ENCODE measurements at regions of chr4 and their contacts with region 1.

Region 1: DNA sequence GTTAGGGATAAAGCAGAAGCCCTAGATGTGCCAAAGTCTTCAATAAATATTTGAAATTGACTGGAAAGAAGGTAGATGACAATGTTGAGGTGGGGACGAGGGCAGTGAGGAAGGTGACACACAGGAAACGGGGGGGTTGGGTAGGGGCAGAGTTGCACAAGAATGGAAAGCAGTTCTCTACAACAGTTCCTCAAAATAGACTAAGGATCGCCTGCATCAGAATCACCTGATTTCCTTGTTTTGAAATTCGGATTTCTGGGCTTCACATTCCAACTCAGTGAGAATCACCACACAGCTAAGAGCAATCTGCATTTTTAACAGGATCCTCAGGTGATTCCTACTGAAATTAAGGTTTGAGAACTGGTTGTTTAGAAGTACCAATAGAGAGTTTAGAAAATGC is 70.6 kb downstream of the ARFIP1 start:
- DNase-seq: no peak
- H3K4me3 ChIP-seq: no peak overlapping the region
- H3K27ac ChIP-seq: no peak overlapping the region
- H3K4me1 ChIP-seq: no peaks in the 10 kb centered on the region
- H3K27me3 ChIP-seq: no peaks in the 10 kb centered on the region
- CTCF ChIP-seq: no peak
- EP300 ChIP-seq: no peak
- POLR2A ChIP-seq: no peak

Region 2: DNA sequence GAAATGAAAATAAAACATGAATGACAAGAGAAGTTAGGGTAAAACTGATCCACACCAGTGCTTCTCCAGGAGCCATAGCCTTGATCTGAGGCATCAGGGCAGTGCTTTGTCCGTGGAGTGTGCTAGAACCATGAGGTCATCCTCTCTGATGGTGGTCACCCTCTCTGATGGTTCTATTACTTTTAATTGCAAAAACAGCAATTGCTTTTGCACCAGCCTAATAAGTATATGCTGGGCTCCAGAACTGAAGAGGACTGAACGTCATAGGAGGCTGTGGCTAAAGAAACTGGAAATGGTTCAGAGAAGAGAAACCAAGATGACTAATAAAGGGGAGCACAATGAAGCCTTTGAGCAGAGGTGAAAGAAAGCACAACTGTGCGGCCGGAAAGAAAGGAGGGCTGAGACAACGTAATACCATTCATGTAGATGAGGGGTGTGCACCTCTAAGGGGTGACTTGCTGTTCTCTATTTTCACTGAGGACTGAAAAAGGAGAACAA is 153.6 kb before region 1 on chr4:
- intact Hi-C with region 1: no loop called
- DNase-seq: no peak
- H3K4me3 ChIP-seq: no peak overlapping the region
- H3K27ac ChIP-seq: no peak overlapping the region
- H3K4me1 ChIP-seq: no peaks in the 10 kb centered on the region
- H3K27me3 ChIP-seq: no peaks in the 10 kb centered on the region
- CTCF ChIP-seq: no peak
- EP300 ChIP-seq: no peak
- POLR2A ChIP-seq: no peak

Region 3: DNA sequence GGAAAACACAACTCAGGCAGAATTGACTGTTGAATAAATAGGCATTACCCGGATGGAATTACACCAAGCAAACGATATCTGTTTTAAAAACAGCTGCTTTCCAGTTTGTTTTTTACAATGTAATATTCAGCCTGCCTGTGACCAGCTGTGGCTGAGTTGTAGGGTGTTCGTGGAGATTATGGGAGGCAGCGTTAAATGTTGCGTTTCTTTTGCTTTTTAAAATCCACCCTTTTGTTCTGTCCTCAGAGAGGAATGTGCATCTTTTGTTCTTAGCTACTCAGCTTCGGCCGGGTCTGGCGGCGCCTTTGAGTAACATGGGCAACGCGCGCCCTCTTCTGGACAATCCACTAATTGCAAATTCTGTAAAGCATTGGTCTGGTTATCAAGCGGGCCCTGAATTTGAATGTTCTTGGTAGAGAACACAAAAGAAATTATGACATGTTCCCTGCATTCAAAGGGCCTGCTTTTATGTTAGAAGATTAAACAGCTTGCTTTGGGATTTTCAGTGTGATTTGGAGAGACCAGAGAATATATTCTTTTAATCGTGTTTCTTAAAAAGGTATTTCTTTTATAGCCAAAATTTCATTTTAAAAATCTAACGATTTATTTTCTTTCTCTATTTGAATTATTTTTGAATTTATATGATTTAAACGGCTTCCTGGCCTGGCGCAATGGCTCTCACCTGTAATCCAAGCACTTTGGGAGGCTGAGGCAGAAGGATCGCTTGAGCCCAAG is 277.6 kb after region 1 on chr4:
- intact Hi-C with region 1: loop called in 1 of 4 experiments (anchors 5 kb)
- DNase-seq: peak; percentile 75 to 86 (median 83)
- H3K4me3 ChIP-seq: no peak overlapping the region
- H3K27ac ChIP-seq: no peak overlapping the region
- H3K4me1 ChIP-seq: no peaks in the 10 kb centered on the region
- H3K27me3 ChIP-seq: no peaks in the 10 kb centered on the region
- CTCF ChIP-seq: peak; percentile 67 to 75 (median 69)
- EP300 ChIP-seq: no peak
- POLR2A ChIP-seq: no peak